ENCODE measurements at regions of chr11 and their contacts with region 1.

Region 1: DNA sequence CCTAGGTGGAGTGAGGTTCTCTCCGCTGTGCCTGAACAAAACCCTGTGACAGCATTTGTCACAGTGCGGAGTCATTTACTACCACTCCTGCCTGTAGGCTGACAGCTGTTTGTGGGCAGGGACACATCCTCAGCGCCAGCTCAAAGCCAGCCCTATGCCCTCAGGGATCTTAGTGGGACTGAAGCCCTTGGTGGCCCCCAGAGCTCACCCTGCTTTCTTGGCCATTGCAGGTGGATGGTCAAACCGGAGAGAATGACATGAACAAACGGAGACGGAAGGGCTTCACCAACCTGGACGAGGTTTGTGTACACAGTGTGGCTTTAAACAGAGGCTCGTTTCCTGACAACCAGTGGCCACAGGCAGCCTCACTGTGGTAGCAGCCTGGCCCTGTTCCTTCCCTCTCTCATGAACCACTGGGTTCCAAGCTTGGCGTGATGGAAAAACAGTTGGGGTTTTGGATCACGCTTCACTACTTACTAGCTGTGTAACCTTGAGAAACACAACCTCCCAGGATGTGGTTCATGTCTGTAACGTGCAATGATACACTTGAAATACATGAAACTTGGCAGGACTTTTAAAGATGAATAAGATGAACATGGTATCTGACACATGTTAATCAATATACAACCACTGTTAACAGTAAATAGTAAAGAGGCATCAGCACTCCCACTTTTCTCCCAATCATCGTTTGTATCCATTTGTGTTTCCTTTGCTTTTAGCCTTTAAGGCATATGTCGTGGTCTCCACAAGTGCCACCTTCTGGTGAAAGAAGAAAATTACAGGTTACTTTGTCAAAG is 125.8 kb downstream of the MICAL2 start:
- ATAC-seq: peak in 6 of 8 experiments; percentile 37 to 75 (median 62)
- H3K4me3 ChIP-seq: no peak overlapping the region
- H3K27ac ChIP-seq: no peak overlapping the region
- H3K4me1 ChIP-seq: no peaks in the 10 kb centered on the region

Region 2: GRCh38 chr11:12066799-12067508 is 169.2 kb before region 1 on chr11:
- in situ Hi-C with region 1: loop called in 4 of 9 experiments (anchors 25 kb)
- ATAC-seq: peak in 7 of 8 experiments; percentile 48 to 84 (median 67)
- H3K4me3 ChIP-seq: no peak overlapping the region
- H3K27ac ChIP-seq: peak overlapping the region in 1 of 2 donors; percentile 43
- H3K4me1 ChIP-seq: peaks cover 20 to 22% of the 10 kb centered on the region in 2 donors

Region 3: DNA sequence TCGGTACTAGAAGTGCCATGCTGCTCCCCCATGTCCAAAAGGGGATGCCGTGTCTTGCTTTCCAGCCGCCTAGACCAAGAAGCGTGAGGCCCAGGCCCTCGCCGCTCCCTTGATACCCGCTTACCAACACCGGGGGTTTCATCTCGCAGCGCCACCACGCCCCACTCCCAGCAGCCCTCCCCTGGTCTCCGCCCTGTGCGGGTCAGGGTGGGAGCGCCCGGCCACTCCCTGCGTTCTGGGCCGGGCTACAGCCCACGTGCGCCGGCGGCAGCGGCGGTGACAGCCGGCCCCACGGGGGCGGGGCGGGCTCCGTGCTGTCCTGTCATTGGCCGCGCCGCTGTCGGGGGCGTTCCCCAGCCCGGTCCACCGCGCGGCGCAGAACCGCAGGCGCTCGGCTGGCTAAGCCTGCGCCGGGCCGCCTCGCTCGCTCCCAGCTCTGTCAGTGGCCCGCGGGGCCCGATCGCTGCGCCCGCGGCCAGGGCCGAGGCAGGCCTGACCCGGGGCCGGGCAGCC is 125.9 kb before region 1 on chr11 and contains the start of gene MICAL2:
- in situ Hi-C with region 1: loop called in 1 of 9 experiments (anchors 25 kb)
- ATAC-seq: peak; percentile 96 to 99 (median 96)
- H3K4me3 ChIP-seq: peak within 1 kb of the TSS; percentile 36 to 46 (median 37)
- H3K27ac ChIP-seq: no peak within 1 kb of the TSS
- H3K4me1 ChIP-seq: peaks cover 0 to 9% of the 10 kb centered on the region in 2 donors
- total RNA-seq, gene MICAL2: 0.71 to 33.6 (median 3.6) TPM